ENCODE measurements at regions of chr14 and their contacts with region 1.

Region 1: DNA sequence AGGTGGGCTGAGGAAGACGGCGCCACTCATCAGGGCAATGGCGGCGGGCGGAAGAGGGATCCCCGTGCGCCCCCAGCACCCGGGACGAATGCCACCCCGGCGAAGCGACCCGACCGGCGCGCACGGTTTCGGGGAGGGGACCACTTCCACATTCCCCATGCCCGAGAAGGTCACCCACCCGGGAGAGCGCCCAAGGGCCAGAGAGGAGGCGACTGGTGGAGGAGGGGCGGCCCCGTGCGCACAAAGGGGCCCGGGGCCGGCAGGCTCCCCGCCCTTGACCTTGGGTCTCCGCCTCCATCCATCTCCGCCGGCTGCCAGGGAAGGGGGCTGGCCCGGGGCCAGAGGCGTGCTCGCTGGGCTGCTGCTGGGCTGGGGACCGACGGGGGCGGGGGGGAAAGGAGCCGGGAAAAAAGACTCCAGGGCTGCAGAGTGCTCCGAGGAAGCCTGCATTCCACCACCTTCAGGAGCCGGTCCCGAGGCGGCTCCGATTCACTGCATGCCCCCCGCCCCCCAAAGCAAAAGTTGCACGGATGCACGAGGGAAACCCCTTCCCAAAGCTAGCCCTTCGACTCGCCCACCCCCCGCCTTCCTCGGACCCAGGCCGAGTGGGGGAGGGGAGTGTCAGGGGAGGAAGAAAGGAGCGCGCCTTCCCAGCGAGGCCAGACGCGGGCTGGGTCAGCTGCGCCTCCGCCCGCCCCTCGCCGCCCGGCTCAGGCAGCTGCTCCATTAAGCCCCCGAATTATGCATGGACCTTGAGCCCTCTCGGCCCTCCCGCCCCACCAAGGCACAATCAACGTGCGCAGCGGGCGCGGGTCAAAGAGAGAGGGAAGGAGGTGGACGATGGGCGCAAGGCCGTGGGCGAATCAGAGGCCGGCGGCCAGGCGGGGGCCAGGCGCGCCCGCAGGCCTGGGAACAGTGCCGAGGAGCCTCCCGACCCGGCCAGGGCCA is 26.2 kb downstream of the BCL11B start:
- DNase-seq: peak; percentile 65 to 86
- H3K4me3 ChIP-seq: peak overlapping the region; percentile 26
- H3K4me1 ChIP-seq: peaks cover 33% of the 10 kb centered on the region
- H3K27me3 ChIP-seq: no peaks in the 10 kb centered on the region

Region 2: GRCh38 chr14:98890556-98891529 is 355.0 kb before region 1 on chr14:
- in situ Hi-C with region 1: loop called (anchors 10 kb)
- DNase-seq: peak; percentile 86 to 98
- H3K4me3 ChIP-seq: no peak overlapping the region
- H3K4me1 ChIP-seq: peaks cover 24% of the 10 kb centered on the region
- H3K27me3 ChIP-seq: no peaks in the 10 kb centered on the region